ENCODE measurements at regions of chr19 and their contacts with region 1.

Region 1: GRCh38 chr19:771332-771785 is 20.4 kb downstream of the MISP start:
- DNase-seq: no peak
- ATAC-seq: peak; percentile 65
- H3K4me3 ChIP-seq: no peak overlapping the region
- H3K27ac ChIP-seq: no peak overlapping the region
- H3K4me1 ChIP-seq: no peaks in the 10 kb centered on the region
- H3K27me3 ChIP-seq: no peaks in the 10 kb centered on the region
- CTCF ChIP-seq: peak; percentile 62

Region 2: DNA sequence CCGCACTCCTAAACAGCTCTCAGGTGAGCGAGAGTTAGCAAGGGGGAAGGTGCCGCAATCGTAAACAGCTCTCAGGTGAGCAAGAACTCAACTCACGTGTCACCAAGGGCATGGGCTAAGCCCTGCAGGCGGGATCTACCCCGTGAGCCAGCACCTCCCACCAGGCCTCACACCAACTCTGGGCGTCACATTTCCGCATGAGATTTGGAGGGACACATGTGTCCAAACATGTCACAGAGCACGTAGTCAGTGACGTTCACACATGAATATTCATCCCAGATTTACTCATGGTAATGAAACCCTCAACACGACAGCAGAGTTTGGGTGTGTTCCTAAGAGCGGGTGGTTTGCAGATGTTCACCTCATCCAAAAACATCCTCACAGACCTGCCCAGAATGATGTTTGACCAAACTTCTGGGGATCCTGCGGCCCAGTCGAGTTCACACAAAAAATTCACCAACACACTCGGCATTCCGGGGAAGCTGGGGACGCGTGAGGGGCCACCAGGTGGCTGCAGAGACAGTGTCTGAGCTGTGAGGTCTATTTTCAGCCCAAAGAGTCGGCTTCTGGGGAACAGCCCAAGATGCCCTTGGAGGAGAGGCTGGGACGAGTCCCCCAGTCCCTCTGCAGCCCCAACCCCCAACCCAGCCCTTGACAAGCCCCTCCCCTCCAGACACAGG is 382.0 kb before region 1 on chr19:
- intact Hi-C with region 1: no loop called
- DNase-seq: peak; percentile 34
- ATAC-seq: no peak
- H3K4me3 ChIP-seq: no peak overlapping the region
- H3K27ac ChIP-seq: no peak overlapping the region
- H3K4me1 ChIP-seq: no peaks in the 10 kb centered on the region
- H3K27me3 ChIP-seq: peaks cover 2% of the 10 kb centered on the region
- CTCF ChIP-seq: no peak

Region 3: DNA sequence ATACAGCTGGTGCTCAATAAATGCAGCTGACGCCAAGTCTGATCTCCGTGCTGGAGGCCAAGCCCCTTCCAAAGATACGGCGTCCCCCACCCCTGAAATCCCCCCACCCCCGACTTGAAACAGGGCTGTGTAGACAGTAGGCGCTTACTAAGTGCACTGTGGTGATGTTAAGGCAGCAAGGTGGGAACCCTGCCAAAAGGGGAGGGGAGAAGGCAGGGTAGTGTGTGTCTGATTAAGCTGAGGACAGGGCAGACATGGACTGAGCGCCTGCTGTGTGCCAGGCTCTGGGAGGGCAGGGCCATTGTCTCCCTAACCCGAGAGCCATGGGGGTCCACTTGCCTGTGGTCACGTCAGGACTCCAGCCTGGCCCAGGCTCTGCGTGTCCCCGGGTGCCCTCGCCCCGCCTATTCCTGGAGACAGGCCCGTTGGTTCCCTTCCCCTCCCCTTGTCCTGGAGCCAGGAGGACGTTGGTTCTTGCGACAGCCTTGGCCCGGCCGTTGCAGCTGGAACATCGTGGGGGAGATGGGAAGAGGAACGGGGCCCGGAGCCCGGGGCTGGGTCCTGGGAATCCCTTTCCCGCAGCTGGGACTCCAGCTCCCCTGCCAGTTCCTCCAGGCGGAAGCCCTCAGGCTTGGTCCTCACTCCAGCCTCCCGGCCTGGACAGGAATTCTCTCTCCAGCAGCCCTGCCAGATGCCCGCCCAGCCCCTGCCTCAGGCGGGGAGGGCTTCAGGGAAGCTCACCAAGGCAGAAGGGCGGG is 79.0 kb after region 1 on chr19:
- intact Hi-C with region 1: loop called (anchors 10 kb)
- DNase-seq: peak; percentile 93
- ATAC-seq: peak; percentile 93
- H3K4me3 ChIP-seq: no peak overlapping the region
- H3K27ac ChIP-seq: peak overlapping the region; percentile 68
- H3K4me1 ChIP-seq: peaks cover 17% of the 10 kb centered on the region
- H3K27me3 ChIP-seq: peaks cover 32% of the 10 kb centered on the region
- CTCF ChIP-seq: no peak

Region 4: DNA sequence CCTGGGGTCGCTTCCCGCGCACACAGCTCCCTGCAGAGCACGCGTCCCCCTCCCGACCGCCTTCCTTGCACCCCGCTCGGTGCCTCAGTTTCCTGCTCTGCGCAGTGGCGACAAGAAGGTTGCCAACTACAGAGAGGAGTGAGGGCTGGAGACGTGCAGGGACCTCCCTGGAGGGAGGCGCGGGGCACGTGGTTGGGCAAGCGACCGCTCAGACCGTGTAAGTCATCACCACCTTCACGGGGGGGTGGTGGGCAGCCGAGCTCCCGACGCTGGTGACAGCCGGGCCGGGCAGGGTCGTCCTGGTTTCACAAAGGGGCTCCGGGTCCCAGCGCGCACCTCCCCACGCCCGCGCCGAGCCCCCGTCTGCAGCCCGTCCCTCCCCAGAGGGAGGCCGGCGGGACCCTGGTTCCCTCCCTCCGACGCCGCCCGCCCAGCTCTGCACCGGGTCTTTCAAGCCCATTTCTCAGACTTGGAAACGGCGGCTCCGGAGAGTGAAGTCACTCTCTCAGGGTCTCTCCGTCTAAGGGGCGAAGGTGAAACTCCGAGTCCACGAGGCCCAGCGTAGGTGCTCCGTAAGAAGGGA is 153.7 kb after region 1 on chr19:
- intact Hi-C with region 1: loop called (anchors 5 kb)
- DNase-seq: peak; percentile 72
- ATAC-seq: peak; percentile 51
- H3K4me3 ChIP-seq: peak overlapping the region; percentile 91
- H3K27ac ChIP-seq: peak overlapping the region; percentile 92
- H3K4me1 ChIP-seq: peaks cover 8% of the 10 kb centered on the region
- H3K27me3 ChIP-seq: peaks cover 14% of the 10 kb centered on the region
- CTCF ChIP-seq: no peak

Region 5: DNA sequence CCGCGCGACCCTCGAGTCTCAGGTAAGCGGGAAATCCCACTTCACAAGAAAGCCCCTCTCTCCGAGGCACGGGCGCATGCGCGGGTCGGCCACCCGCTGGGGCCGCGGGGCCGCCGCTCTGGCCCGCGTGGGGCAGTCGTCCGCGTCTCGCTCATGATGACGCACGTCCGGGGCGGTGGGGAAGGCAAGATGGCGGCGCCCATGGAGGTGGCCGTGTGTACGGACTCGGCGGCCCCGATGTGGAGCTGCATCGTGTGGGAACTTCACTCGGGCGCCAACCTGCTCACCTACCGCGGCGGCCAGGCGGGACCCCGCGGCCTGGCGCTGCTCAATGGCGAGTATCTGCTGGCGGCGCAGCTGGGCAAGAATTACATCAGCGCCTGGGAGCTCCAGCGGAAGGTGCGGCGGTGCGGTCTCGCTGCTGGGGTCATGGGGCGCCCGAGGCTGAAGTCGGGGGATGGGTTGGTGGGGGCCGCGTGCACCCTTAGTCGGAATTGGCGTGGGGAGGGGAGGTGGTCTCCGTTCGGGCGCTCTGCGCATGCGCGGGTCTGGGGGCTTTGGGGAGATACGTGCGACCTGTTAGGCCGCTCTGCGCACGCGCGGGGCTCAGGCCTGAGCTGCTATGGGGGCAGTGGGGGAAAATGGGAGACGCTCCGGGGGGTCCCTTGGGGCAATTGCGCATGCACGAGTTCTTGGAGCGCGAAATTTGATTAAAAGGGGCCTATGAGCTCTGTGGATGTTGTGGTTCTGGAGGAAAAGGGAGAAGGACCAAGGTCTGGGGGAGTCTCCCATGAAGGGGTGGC is 213.0 kb after region 1 on chr19 and contains the start of gene WDR18:
- intact Hi-C with region 1: loop called (anchors 10 kb)
- DNase-seq: peak; percentile 97
- ATAC-seq: peak; percentile 94
- H3K4me3 ChIP-seq: peak within 1 kb of the TSS; percentile 96
- H3K27ac ChIP-seq: peak within 1 kb of the TSS; percentile 90
- H3K4me1 ChIP-seq: peaks cover 20% of the 10 kb centered on the region
- H3K27me3 ChIP-seq: no peaks in the 10 kb centered on the region
- CTCF ChIP-seq: peak; percentile 23
- total RNA-seq, gene WDR18: 21.9 TPM